BJ (cell line): ENCODE measurements at regions of chr1 and their contacts with region 1.

Region 1: DNA sequence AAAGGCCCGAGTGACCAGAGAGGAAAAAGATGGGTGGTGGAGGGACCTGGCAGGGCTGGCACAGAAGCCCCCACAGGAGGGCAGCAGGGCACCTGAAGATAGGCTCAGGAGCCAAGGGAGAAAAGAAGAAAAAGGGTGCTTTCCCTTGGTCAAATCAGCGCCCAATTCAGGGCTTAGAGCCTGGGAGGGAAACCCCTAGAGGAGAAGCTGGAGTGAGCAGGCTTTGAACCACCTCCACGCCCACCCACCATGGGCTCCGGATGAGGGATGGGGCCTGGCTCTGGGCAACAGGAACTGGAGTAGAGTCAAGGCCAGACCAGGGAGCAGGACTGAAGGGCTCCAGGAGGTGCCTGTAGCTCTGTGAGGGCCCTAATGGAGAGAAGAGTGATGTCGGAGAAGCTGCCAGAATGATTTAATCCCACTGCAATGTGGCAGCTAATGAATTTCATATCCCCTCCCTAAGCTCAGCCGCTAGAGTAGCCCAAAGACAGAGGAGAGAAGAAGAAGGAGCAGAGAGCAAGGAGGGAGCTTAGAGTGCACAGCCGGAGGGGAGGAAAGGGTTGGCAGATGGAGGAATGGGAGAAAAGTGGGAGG is 12.0 kb upstream of the PRELP start:
- DNase-seq: no peak
- H3K4me3 ChIP-seq: no peak overlapping the region
- H3K27me3 ChIP-seq: no peaks in the 10 kb centered on the region
- CTCF ChIP-seq: 0 out of 2 replicates have a peak, but pooled peaks have one; percentile 12

Region 2: GRCh38 chr1:203450479-203451149 is 13.0 kb before region 1 on chr1:
- CTCF ChIA-PET with region 1: interaction called, 10 read pairs
- POLR2A ChIA-PET with region 1: no interaction called
- DNase-seq: no peak
- H3K4me3 ChIP-seq: no peak overlapping the region
- H3K27me3 ChIP-seq: no peaks in the 10 kb centered on the region
- CTCF ChIP-seq: 0 out of 2 replicates have a peak, but pooled peaks have one; percentile 2

Region 3: DNA sequence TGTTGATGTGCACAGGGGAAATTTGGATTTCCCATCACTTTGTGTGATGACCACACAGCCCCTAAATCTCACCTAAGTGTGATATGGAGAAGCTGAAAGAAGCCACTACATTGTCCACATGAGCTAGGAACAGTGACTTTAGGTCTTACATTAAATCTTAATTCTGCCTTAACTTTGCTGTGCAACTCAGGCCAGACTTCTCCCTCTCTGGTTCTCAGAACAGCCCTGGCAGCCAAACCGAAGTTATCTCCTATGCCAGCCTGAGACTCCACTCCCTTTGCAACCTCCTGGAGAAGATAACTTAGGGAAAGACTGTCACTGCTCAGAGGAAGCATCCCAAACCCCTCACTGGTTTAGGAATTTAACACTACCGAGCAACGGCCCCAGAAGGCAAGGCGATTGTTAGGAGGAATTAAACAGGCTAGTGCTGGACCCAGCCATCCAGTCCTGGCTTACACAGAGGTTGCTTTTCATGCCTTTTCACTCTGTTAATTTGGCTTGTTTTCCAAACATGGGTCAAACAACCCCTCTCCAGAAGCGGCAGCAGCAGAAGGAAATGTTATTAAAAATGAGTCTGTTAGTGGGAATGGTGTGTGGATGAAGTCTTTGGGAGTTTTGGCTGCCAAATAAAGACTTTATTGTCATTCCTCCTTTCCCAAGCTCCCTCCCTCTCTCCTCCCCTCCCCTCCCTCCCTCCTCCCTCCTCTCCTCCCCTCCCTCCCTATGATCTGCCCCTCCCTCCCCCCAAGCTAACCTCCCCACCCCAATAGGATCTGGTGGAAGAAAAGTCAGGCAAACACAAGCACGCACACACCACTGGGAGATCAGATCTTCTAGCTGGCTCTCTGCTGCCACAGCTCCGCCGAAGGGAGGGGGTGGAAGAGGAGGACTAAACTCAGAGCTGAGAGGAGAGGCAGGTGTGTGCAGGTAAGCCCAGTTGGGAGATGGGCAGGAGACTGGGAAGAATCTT is 11.7 kb after region 1 on chr1 and contains the start of gene PRELP:
- CTCF ChIA-PET with region 1: interaction called, 14 read pairs
- POLR2A ChIA-PET with region 1: interaction called, 4 read pairs
- DNase-seq: no peak
- H3K4me3 ChIP-seq: peak within 1 kb of the TSS; percentile 40
- H3K27me3 ChIP-seq: no peaks in the 10 kb centered on the region
- CTCF ChIP-seq: 0 out of 2 replicates have a peak, but pooled peaks have one; percentile 20
- polyA plus RNA-seq, gene PRELP: 2.8 and 3.9 TPM in 2 replicates

Region 4: GRCh38 chr1:203480525-203481084 is 17.0 kb after region 1 on chr1:
- CTCF ChIA-PET with region 1: interaction called, 14 read pairs
- POLR2A ChIA-PET with region 1: interaction called, 4 read pairs
- DNase-seq: peak; percentile 96
- H3K4me3 ChIP-seq: no peak overlapping the region
- H3K27me3 ChIP-seq: no peaks in the 10 kb centered on the region
- CTCF ChIP-seq: no peak

Region 5: GRCh38 chr1:203744075-203744972 is 280.8 kb after region 1 on chr1:
- CTCF ChIA-PET with region 1: no interaction called
- POLR2A ChIA-PET with region 1: no interaction called
- DNase-seq: peak; percentile 4
- H3K4me3 ChIP-seq: no peak overlapping the region
- H3K27me3 ChIP-seq: no peaks in the 10 kb centered on the region
- CTCF ChIP-seq: no peak